BJ (cell line): ENCODE measurements at regions of chr16 and their contacts with region 1.

Region 1: GRCh38 chr16:67561824-67562525 is 351 bp upstream of the CTCF start:
- DNase-seq: peak; percentile 86
- H3K4me3 ChIP-seq: peak overlapping the region; percentile 67
- H3K27me3 ChIP-seq: no peaks in the 10 kb centered on the region
- CTCF ChIP-seq: no peak

Region 2: DNA sequence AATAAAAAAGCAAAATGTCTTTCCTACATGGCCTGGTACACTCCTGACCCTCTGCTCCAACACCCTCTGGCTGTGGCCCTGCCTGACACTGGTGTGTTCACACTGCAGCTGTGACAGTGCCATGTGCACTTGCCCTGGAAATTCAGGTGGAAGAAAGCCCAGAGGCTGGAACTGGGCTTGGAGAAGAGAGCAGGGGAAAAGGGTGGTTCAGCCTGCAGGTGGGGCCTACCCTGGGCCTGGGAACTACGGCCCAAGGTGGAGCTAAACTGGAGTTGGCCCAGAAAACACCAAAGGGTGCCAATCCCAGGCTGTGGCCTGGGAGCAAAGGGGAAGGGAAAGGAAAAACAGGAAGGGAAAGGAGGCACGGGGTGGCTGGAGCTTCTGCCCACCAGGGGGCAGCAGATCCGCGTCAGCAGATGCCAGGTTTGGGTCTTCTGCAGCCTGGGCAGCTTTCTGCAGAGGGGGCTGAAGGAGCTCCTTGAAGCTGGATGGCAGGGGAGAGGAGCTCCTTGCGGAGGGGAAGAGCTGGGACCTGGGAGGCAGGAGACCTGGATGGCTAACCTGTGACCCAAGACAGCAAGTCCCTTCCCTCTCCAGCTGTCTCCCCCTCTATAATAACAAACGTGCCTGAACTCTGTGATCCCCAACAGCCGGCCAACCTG is 15.1 kb before region 1 on chr16:
- CTCF ChIA-PET with region 1: interaction called, 42 read pairs
- POLR2A ChIA-PET with region 1: no interaction called
- DNase-seq: no peak
- H3K4me3 ChIP-seq: no peak overlapping the region
- H3K27me3 ChIP-seq: no peaks in the 10 kb centered on the region
- CTCF ChIP-seq: peak; percentile 95

Region 3: GRCh38 chr16:67632415-67633172 is 70.6 kb after region 1 on chr16:
- CTCF ChIA-PET with region 1: interaction called, 13 read pairs
- POLR2A ChIA-PET with region 1: no interaction called
- DNase-seq: no peak
- H3K4me3 ChIP-seq: no peak overlapping the region
- H3K27me3 ChIP-seq: no peaks in the 10 kb centered on the region
- CTCF ChIP-seq: no peak

Region 4: DNA sequence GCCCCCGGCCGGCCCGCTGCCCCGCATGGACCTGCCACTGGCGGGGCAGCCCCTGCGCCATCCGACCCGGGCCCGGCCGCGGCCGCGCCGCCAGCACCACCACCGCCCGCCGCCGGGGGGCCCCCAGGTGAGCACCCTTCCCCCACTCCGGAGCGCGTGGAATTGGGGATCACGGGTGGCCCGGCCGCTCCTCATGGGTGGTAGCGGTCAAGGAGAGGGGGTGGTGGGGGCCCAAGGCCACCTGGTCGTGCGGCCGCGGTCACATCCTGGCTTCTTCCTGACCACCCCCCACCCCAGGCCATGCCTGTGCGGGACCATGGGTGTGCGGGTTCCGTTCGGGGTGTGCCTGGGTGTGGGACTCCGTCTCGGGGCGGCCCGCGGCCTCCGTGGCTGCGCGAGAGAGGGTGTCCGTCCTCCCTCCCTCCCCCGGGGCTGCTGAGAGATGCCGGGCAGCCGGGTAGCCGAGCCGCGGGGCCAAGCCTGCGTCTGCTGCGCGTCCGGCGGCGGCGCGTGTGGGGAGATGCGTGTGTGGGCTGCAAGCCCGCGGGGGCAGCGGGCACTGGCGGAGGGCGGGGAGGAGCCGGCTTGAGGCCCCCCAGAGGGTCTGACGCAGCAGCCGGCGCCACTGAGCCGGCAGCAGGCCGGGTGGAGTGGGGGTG is 91.3 kb after region 1 on chr16:
- CTCF ChIA-PET with region 1: interaction called, 10 read pairs
- POLR2A ChIA-PET with region 1: no interaction called
- DNase-seq: no peak
- H3K4me3 ChIP-seq: peak overlapping the region; percentile 44
- H3K27me3 ChIP-seq: peaks cover 26% of the 10 kb centered on the region
- CTCF ChIP-seq: peak; percentile 23; the same call in 1 of the 2 replicates